CD14-positive monocyte (primary cell): ENCODE measurements at regions of chr11 and their contacts with region 1.

Region 1: GRCh38 chr11:67353317-67354074 is at the start of gene POLD4:
- DNase-seq: peak; percentile 97 to 99 (median 99)
- H3K4me3 ChIP-seq: peak within 1 kb of the TSS; percentile 52 to 85 (median 73)
- H3K4me3 Mint-ChIP-seq: peak within 1 kb of the TSS; percentile 87 to 96
- H3K27ac ChIP-seq: peak within 1 kb of the TSS; percentile 96 to 99
- H3K27ac Mint-ChIP-seq: peak within 1 kb of the TSS; percentile 97 to 100 (median 99)
- H3K4me1 ChIP-seq: peaks cover 73 to 76% of the 10 kb centered on the region in 2 donors
- H3K4me1 Mint-ChIP-seq: peaks cover 71% of the 10 kb centered on the region
- H3K27me3 ChIP-seq: no peaks in the 10 kb centered on the region
- H3K27me3 Mint-ChIP-seq: peaks cover 0 to 3% (median 2%) of the 10 kb centered on the region in 3 donors
- CTCF ChIP-seq: no peak
- polyA plus RNA-seq, gene POLD4: 157 to 205 (median 176) TPM

Region 2: GRCh38 chr11:67373925-67374618 is 20.6 kb after region 1 on chr11:
- intact Hi-C with region 1: loop called in 1 of 2 experiments (anchors 2 kb)
- DNase-seq: peak; percentile 90 to 98 (median 91)
- H3K4me3 ChIP-seq: peak overlapping the region; percentile 35 to 82 (median 51)
- H3K4me3 Mint-ChIP-seq: peak overlapping the region; percentile 88 to 92
- H3K27ac ChIP-seq: peak overlapping the region; percentile 25 to 77
- H3K27ac Mint-ChIP-seq: peak overlapping the region; percentile 80 to 96 (median 94)
- H3K4me1 ChIP-seq: peaks cover 50 to 60% of the 10 kb centered on the region in 2 donors
- H3K4me1 Mint-ChIP-seq: peaks cover 54% of the 10 kb centered on the region
- H3K27me3 ChIP-seq: no peaks in the 10 kb centered on the region
- H3K27me3 Mint-ChIP-seq: peaks cover 8 to 17% (median 10%) of the 10 kb centered on the region in 3 donors
- CTCF ChIP-seq: peak; percentile 71

Region 3: DNA sequence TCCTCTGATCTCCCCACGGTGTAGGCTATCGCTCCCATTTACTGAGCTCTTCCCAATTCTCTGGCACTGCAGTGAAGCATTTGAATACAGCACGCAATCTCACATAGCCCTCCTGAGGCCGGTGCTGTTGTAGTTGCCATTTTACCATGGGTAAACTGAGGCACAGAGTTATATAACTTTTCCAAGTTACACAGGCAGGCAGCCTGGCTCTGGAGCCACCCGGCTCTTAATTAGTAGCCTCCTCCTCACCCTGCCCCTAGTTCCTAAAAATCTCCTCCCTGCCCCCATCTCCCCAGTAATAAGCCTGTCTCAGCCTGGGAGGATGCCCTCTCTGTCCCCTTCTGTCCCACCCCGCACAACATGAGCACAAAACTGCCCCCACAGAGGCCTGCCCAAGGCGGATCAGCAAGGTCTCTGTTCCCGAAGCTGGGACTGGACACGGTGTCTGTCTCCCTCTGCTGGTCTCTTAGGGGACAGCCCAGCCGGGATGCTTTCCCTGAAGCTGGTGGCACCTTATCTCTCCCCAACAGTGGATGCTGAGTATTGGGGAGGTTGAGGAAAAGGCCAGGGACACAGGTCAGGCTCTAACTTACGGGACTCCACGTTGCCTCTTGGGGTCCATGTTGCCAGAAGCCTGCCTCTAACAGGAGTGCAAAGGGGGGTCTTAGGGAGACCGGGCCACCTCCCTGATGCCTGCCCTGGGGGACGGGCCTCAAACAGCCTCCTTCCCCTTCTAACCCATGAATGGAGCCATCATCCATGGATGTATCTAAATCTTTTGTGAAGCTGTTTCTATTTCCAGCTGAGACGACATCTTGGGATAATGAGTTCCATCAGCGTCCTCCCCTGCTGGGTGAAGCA is 29.0 kb after region 1 on chr11:
- intact Hi-C with region 1: loop called (anchors 1 kb)
- DNase-seq: peak; percentile 70 to 84 (median 80)
- H3K4me3 ChIP-seq: peak overlapping the region in 1 of 3 experiments; percentile 64
- H3K4me3 Mint-ChIP-seq: peak overlapping the region in 1 of 2 donors; percentile 49
- H3K27ac ChIP-seq: no peak overlapping the region
- H3K27ac Mint-ChIP-seq: peak overlapping the region; percentile 0 to 95 (median 89)
- H3K4me1 ChIP-seq: peaks cover 48 to 54% of the 10 kb centered on the region in 2 donors
- H3K4me1 Mint-ChIP-seq: peaks cover 49% of the 10 kb centered on the region
- H3K27me3 ChIP-seq: no peaks in the 10 kb centered on the region
- H3K27me3 Mint-ChIP-seq: peaks cover 0 to 4% (median 2%) of the 10 kb centered on the region in 3 donors
- CTCF ChIP-seq: peak; percentile 92

Region 4: GRCh38 chr11:67395555-67396257 is 42.2 kb after region 1 on chr11:
- intact Hi-C with region 1: no loop called
- DNase-seq: no peak
- H3K4me3 ChIP-seq: no peak overlapping the region
- H3K4me3 Mint-ChIP-seq: no peak overlapping the region
- H3K27ac ChIP-seq: no peak overlapping the region
- H3K27ac Mint-ChIP-seq: peak overlapping the region in 2 of 7 donors; percentile 36 to 41
- H3K4me1 ChIP-seq: peaks cover 34 to 61% of the 10 kb centered on the region in 2 donors
- H3K4me1 Mint-ChIP-seq: peaks cover 52% of the 10 kb centered on the region
- H3K27me3 ChIP-seq: no peaks in the 10 kb centered on the region
- H3K27me3 Mint-ChIP-seq: peaks cover 0 to 3% (median 0%) of the 10 kb centered on the region in 3 donors
- CTCF ChIP-seq: no peak